Left lung (tissue), 14 donors: ENCODE measurements at regions of chr7 and their contacts with region 1.

Region 1: DNA sequence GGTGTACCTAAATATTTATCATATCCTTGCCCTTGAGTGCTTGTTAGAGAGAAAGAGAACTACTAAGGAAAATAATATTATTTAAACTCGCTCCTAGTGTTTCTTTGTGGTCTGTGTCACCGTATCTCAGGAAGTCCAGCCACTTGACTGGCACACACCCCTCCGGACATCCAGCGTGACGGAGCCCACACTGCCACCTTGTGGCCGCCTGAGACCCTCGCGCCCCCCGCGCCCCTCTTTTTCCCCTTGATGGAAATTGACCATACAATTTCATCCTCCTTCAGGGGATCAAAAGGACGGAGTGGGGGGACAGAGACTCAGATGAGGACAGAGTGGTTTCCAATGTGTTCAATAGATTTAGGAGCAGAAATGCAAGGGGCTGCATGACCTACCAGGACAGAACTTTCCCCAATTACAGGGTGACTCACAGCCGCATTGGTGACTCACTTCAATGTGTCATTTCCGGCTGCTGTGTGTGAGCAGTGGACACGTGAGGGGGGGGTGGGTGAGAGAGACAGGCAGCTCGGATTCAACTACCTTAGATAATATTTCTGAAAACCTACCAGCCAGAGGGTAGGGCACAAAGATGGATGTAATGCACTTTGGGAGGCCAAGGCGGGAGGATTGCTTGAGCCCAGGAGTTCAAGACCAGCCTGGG is 11.4 kb downstream of the SERPINE1 start:
- DNase-seq: peak in 3 of 4 donors; percentile 60 to 86 (median 84)
- ATAC-seq: peak; percentile 85
- H3K4me3 ChIP-seq: peak overlapping the region in 1 of 2 donors; percentile 2
- H3K27ac ChIP-seq: peak overlapping the region; percentile 51 to 85
- H3K4me1 ChIP-seq: peaks cover 7 to 63% of the 10 kb centered on the region in 2 donors
- H3K27me3 ChIP-seq: no peaks in the 10 kb centered on the region
- CTCF ChIP-seq: peak; percentile 72 to 74

Region 2: DNA sequence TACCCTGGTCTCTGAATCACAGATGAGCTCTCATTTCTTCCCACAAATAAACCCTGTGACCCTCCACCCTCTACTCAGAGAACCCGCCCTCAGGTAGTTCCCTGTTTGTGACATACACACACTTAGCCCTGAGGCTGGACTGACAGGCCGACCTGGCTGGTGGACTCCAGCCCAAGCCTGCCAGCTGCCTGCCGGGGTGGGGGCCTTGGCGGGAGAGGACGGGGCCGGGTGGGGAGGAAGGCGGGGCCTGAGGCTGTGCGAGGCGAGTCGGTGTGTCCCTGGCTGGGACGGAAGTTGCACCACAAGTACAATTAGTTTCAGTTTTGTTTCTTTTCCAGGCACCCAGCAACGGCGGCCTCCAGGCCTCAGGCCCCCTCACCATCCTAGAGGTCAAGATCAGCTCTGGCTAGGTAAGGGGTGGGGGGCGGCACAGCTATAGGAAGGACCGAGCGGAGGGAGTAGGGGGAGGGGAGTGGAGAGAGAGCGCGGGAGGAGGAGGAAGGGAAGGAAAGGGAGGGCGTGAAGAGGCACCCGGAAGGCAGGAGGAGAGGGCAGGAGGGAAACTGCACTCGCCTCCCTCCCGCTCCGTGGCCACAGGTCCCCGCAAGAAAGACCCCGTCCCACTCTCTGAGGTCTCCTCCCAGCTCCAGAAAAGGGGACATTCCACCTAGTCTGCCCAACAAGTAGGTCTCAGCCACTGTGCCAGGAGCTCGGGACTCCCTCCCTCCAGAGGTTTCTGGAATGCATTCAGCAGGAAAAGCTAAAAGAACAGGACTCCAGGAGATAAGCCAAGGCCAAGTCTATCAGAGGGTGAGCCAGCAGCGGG is 53.0 kb before region 1 on chr7 and contains the start of gene TRIM56:
- intact Hi-C with region 1: loop called in 1 of 2 experiments (anchors 10 kb)
- DNase-seq: peak; percentile 78 to 96 (median 91)
- ATAC-seq: peak; percentile 96
- H3K4me3 ChIP-seq: peak within 1 kb of the TSS; percentile 49 to 86
- H3K27ac ChIP-seq: peak within 1 kb of the TSS; percentile 93 to 94
- H3K4me1 ChIP-seq: peaks cover 9 to 52% of the 10 kb centered on the region in 2 donors
- H3K27me3 ChIP-seq: no peaks in the 10 kb centered on the region
- CTCF ChIP-seq: no peak
- polyA plus RNA-seq, gene TRIM56: 23.4 to 29.2 (median 25.8) TPM

Region 3: DNA sequence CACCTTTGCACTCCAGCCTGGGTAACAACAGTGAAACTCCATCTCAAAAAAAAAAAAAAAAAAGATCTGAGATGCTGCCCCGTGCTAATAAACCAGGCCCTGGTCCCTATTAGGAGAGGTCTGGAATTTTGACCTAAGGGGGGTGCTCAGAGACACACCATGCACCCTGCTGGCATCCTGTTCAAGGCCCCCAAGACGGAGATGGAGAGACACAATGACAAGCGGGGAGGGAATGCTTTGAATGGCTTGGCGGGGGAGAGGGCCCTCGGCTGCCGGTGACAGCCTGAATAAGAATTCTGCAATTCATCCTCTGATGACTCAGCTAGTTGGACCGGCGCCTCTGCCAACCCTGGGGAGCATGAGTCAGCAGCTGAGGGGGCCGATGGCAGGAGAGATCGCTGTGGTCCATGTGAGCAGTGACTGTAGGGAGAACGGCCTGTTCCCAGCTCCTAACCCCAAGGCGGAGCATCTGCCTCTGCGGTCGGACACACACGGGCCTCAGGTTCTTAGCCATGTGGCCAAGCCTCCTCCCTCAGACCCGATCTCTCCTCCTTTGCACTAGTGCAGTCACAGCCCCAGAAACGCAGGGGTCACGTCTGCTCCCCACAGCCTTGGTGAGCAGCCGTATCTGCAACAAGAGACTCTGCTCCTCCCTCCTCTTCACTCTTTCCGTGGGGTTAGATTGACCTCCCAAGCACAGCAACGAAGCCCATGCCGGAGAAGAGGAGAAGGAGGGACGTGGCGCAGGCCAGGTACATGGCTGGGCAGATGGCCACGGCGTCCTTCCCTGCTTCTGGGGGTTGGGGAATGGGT is 38.2 kb before region 1 on chr7:
- intact Hi-C with region 1: loop called in 1 of 2 experiments (anchors 5 kb)
- DNase-seq: peak in 3 of 4 donors; percentile 57 to 93 (median 92)
- ATAC-seq: peak; percentile 93
- H3K4me3 ChIP-seq: no peak overlapping the region
- H3K27ac ChIP-seq: peak overlapping the region; percentile 54 to 74
- H3K4me1 ChIP-seq: peaks cover 10 to 45% of the 10 kb centered on the region in 2 donors
- H3K27me3 ChIP-seq: peaks cover 0 to 18% of the 10 kb centered on the region in 2 donors
- CTCF ChIP-seq: no peak

Region 4: GRCh38 chr7:101287032-101287431 is 148.7 kb after region 1 on chr7:
- intact Hi-C with region 1: loop called in 1 of 2 experiments (anchors 10 kb)
- DNase-seq: peak in 1 of 4 donors; percentile 53
- ATAC-seq: no peak
- H3K4me3 ChIP-seq: no peak overlapping the region
- H3K27ac ChIP-seq: no peak overlapping the region
- H3K4me1 ChIP-seq: no peaks in the 10 kb centered on the region
- H3K27me3 ChIP-seq: peaks cover 5 to 23% of the 10 kb centered on the region in 2 donors
- CTCF ChIP-seq: no peak